Caco-2 (cell line): ENCODE measurements at regions of chrX and their contacts with region 1.

Region 1: GRCh38 chrX:136496770-136497598 is at the start of gene HTATSF1:
- DNase-seq: peak; percentile 81 to 83
- H3K4me3 ChIP-seq: peak within 1 kb of the TSS; percentile 82
- H3K4me3 Mint-ChIP-seq: peak within 1 kb of the TSS; percentile 81
- H3K27ac Mint-ChIP-seq: peak within 1 kb of the TSS; percentile 83
- H3K4me1 ChIP-seq: no peaks in the 10 kb centered on the region
- H3K4me1 Mint-ChIP-seq: no peaks in the 10 kb centered on the region
- H3K27me3 ChIP-seq: no peaks in the 10 kb centered on the region
- H3K27me3 Mint-ChIP-seq: no peaks in the 10 kb centered on the region
- CTCF ChIP-seq: no peak
- total RNA-seq, gene HTATSF1: 36.5 and 38.3 TPM in 2 replicates

Region 2: DNA sequence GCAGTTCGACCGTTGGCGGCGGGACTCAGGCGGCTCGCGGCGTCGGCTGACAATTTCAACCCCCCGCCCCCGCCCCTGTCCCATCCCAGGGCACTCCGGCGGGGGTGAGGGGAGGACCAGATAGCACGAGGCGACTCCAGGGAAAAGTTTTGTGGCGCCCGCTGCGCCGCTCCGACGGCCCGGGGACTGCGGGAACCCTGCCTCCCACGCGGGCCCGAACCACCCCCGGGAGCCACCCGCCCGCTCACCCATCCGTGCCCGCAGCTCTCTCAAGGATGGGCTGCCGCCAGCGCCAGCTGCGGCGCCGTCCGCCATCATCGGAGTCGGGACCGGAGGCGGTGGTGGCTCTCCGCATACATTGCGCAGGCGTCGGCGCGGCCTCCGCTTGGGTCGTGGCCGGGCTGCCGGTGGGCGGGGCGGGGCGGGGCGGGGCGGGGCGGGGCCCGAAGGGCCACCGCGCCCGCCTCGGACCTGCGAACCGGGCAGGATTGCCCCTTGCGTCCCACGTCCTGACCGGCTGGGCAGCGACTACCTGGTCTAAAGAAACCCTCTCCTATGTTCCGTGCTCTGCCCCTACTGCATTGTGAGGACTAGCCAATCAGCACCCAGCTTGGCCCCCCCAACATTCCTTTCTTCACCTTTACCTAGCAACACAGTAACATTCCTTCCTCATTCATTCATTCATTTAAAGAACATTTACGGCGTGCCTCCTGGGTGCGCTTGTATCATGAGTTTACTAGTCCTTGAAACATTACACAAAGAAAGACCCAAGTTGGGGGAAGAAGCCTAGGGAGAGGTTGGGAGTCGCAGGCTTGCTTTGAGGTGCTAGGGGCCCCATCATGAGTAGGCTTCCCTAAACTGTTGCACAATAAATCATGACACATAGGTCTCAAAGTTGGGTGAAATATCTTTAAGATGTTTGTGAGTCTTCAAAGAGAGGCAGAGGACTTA is 245.7 kb before region 1 on chrX and contains the start of gene MAP7D3:
- CTCF ChIA-PET with region 1: no interaction called
- POLR2A ChIA-PET with region 1: no interaction called
- intact Hi-C with region 1: loop called (anchors 2 kb)
- DNase-seq: peak; percentile 44 to 57
- H3K4me3 ChIP-seq: peak within 1 kb of the TSS; percentile 65
- H3K4me3 Mint-ChIP-seq: peak within 1 kb of the TSS; percentile 83
- H3K27ac Mint-ChIP-seq: peak within 1 kb of the TSS; percentile 60
- H3K4me1 ChIP-seq: no peaks in the 10 kb centered on the region
- H3K4me1 Mint-ChIP-seq: no peaks in the 10 kb centered on the region
- H3K27me3 ChIP-seq: no peaks in the 10 kb centered on the region
- H3K27me3 Mint-ChIP-seq: no peaks in the 10 kb centered on the region
- CTCF ChIP-seq: no peak
- total RNA-seq, gene MAP7D3: 5.7 and 6.0 TPM in 2 replicates

Region 3: GRCh38 chrX:136468391-136469103 is 28.4 kb before region 1 on chrX:
- CTCF ChIA-PET with region 1: no interaction called
- POLR2A ChIA-PET with region 1: no interaction called
- intact Hi-C with region 1: no loop called
- DNase-seq: no peak
- H3K4me3 ChIP-seq: no peak overlapping the region
- H3K4me3 Mint-ChIP-seq: no peak overlapping the region
- H3K27ac Mint-ChIP-seq: no peak overlapping the region
- H3K4me1 ChIP-seq: no peaks in the 10 kb centered on the region
- H3K4me1 Mint-ChIP-seq: no peaks in the 10 kb centered on the region
- H3K27me3 ChIP-seq: no peaks in the 10 kb centered on the region
- H3K27me3 Mint-ChIP-seq: no peaks in the 10 kb centered on the region
- CTCF ChIP-seq: no peak

Region 4: DNA sequence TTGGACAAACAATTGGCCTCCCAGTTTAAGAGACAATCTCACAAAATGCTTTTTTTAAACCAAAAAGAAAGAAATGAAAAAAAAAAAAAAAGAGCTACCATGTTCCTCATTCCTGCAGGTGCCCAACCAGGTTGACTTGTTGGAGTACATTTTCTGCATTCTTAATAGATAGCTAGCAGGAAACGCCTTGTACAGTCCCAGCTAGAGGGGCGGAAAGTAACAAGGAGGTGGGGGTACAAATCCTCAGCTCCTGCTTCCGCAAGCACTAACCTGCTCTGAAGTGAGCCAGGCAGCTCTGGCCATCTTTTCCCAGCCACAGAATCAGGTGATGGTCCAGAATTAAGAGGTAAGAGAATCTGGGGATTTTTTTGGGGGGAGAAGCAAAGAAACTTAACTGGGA is 35.0 kb after region 1 on chrX and contains the start of gene VGLL1:
- CTCF ChIA-PET with region 1: no interaction called
- POLR2A ChIA-PET with region 1: interaction called, 3 read pairs
- intact Hi-C with region 1: loop called (anchors 2 kb)
- DNase-seq: peak; percentile 56 to 64
- H3K4me3 ChIP-seq: peak within 1 kb of the TSS; percentile 19
- H3K4me3 Mint-ChIP-seq: peak within 1 kb of the TSS; percentile 91
- H3K27ac Mint-ChIP-seq: peak within 1 kb of the TSS; percentile 94
- H3K4me1 ChIP-seq: peaks cover 12% of the 10 kb centered on the region
- H3K4me1 Mint-ChIP-seq: peaks cover 33% of the 10 kb centered on the region
- H3K27me3 ChIP-seq: no peaks in the 10 kb centered on the region
- H3K27me3 Mint-ChIP-seq: no peaks in the 10 kb centered on the region
- CTCF ChIP-seq: no peak
- total RNA-seq, gene VGLL1: 42.3 and 49.5 TPM in 2 replicates

Region 5: GRCh38 chrX:136577552-136577951 is 80.6 kb after region 1 on chrX:
- CTCF ChIA-PET with region 1: no interaction called
- POLR2A ChIA-PET with region 1: interaction called, 6 read pairs
- intact Hi-C with region 1: loop called (anchors 5 kb)
- DNase-seq: peak; percentile 44 to 46
- H3K4me3 ChIP-seq: no peak overlapping the region
- H3K4me3 Mint-ChIP-seq: no peak overlapping the region
- H3K27ac Mint-ChIP-seq: no peak overlapping the region
- H3K4me1 ChIP-seq: no peaks in the 10 kb centered on the region
- H3K4me1 Mint-ChIP-seq: peaks cover 5% of the 10 kb centered on the region
- H3K27me3 ChIP-seq: no peaks in the 10 kb centered on the region
- H3K27me3 Mint-ChIP-seq: peaks cover 7% of the 10 kb centered on the region
- CTCF ChIP-seq: peak; percentile 41 to 69

Region 6: GRCh38 chrX:136872091-136872700 is 375.2 kb after region 1 on chrX:
- CTCF ChIA-PET with region 1: no interaction called
- POLR2A ChIA-PET with region 1: interaction called, 18 read pairs
- intact Hi-C with region 1: no loop called
- DNase-seq: no peak
- H3K4me3 ChIP-seq: no peak overlapping the region
- H3K4me3 Mint-ChIP-seq: no peak overlapping the region
- H3K27ac Mint-ChIP-seq: no peak overlapping the region
- H3K4me1 ChIP-seq: no peaks in the 10 kb centered on the region
- H3K4me1 Mint-ChIP-seq: peaks cover 6% of the 10 kb centered on the region
- H3K27me3 ChIP-seq: no peaks in the 10 kb centered on the region
- H3K27me3 Mint-ChIP-seq: no peaks in the 10 kb centered on the region
- CTCF ChIP-seq: no peak